ENCODE measurements at regions of chr1 and their contacts with region 1.

Region 1: GRCh38 chr1:205919026-205919746 is 24.1 kb downstream of the SLC26A9 start:
- DNase-seq: peak; percentile 61 to 77
- ATAC-seq: peak; percentile 65 to 76
- H3K4me3 ChIP-seq: no peak overlapping the region
- H3K27ac ChIP-seq: peak overlapping the region; percentile 73 to 77 (median 75)
- H3K4me1 ChIP-seq: peaks cover 29 to 46% of the 10 kb centered on the region in 2 donors
- H3K27me3 ChIP-seq: no peaks in the 10 kb centered on the region
- CTCF ChIP-seq: peak; percentile 88 to 93 (median 91)
- POLR2A ChIP-seq: no peak

Region 2: DNA sequence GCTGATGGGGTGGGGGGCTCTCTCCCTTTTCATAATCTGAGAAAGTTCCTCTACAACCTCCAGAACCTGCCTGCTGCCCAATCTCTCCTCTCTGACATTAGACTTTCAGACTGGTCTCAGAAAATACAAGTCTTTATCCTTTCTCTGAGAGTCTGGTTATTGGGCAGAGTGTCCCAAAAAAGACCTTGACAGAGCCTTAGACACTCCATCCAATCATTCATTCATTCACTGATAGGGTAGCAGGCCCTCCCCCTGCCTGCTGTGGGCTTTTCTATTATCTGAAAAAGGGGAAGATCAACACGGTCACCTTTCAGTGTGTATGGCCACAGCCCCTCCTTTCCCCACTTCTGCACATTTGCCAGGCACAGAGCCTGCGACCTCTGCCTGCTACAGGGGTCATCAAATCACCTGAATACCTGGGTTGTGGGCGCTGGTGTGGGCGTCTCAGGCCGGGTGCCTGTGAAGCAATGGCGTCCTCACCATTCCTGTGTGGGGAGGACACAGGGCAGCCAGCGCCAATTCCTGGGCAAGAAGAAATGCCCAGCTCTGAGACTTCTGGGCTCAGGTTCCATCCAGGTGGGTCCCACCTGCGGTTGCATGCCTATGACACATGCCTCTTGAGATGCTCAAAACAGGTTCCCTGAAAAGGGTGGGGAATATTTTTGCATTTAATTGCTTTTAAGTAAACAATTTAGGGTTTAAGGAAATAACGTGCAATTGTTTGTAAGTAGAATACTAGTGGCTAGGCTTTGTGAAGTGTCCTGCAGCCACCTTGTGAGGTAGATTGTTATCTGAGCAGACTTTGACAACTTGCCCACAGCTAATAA is 340.2 kb before region 1 on chr1:
- in situ Hi-C with region 1: no loop called
- intact Hi-C with region 1: no loop called
- DNase-seq: no peak
- ATAC-seq: no peak
- H3K4me3 ChIP-seq: no peak overlapping the region
- H3K27ac ChIP-seq: no peak overlapping the region
- H3K4me1 ChIP-seq: no peaks in the 10 kb centered on the region
- H3K27me3 ChIP-seq: peaks cover 0 to 9% (median 7%) of the 10 kb centered on the region in 3 donors
- CTCF ChIP-seq: no peak
- POLR2A ChIP-seq: no peak

Region 3: DNA sequence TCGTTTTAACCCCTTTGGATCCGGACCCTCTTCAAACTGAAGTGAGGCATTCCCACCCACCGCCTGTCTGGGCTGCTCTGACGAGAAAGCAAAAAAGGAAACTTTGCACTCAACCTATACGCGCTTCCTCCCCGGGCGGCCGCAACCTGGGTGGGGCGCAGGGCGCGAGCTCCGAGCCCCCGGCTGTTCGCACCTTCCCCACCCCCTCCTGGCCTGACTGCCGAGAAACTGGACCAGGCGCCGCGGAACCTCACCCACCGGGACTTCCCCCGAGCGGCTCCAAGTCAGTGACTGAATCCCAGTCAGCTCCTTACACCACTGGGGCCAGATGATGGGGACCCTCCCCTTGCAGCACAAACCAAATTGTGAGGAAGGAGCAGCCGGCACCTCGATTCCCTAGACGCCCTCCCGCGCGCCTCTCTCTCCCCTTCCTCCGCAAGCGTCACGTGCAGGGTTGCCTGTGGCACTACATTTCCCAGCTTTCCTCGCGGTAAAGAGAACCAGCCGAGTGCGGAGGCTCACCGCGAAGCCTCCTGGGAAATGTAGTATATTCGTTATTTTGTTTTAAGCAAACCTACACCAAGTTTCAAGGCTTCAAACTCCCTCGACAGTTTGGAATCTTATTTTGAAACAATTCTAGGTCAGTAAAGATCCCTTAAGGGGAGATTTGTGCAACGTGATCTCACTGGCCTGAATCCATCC is 144.0 kb before region 1 on chr1 and contains the start of gene RAB29:
- in situ Hi-C with region 1: loop called in 1 of 4 experiments (anchors 25 kb)
- intact Hi-C with region 1: no loop called
- DNase-seq: peak; percentile 80 to 84
- ATAC-seq: peak; percentile 98 to 100
- H3K4me3 ChIP-seq: peak within 1 kb of the TSS; percentile 81 to 90 (median 85)
- H3K27ac ChIP-seq: peak within 1 kb of the TSS; percentile 65 to 77 (median 73)
- H3K4me1 ChIP-seq: peaks cover 3 to 9% of the 10 kb centered on the region in 2 donors
- H3K27me3 ChIP-seq: no peaks in the 10 kb centered on the region
- CTCF ChIP-seq: no peak
- POLR2A ChIP-seq: peak; percentile 56 to 59
- total RNA-seq, gene RAB29: 8.4 to 13.8 (median 10.7) TPM

Region 4: DNA sequence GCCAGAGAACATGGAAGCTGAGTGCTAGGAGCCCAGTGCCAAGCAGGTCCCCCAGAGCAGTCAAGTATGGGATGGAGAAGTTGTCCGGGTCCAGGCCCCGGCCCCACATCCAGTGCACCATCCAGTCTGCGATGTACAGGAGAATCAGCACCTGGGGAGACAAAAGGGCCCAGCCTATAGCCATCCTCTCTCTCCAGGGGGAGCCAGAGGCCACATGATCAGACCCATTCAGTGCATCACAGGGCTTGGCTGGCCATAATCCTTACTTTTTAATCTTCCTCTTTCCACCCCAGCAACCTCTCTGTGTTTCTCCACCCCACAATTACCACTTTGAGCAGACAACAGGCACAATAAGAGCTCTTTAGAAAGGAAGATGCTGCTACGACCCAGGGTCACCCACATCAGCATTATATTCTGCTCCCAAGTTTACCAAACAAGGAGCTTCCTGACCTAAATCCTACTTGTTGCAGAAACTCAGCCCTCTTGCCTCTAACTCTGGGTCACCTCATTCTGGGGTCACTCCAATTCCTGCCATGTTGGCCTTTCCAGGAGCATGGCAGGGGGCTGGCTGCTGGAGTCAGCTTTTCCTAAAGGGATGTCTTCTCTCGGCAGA is 127.5 kb before region 1 on chr1:
- in situ Hi-C with region 1: loop called in 3 of 4 experiments (anchors 10 to 25 kb)
- intact Hi-C with region 1: loop called (anchors 2 kb)
- DNase-seq: peak; percentile 37 to 65
- ATAC-seq: peak; percentile 79 to 84
- H3K4me3 ChIP-seq: no peak overlapping the region
- H3K27ac ChIP-seq: peak overlapping the region in 3 of 4 donors; percentile 2 to 45 (median 37)
- H3K4me1 ChIP-seq: peaks cover 0 to 5% of the 10 kb centered on the region in 2 donors
- H3K27me3 ChIP-seq: no peaks in the 10 kb centered on the region
- CTCF ChIP-seq: peak; percentile 59 to 81 (median 67)
- POLR2A ChIP-seq: no peak

Region 5: DNA sequence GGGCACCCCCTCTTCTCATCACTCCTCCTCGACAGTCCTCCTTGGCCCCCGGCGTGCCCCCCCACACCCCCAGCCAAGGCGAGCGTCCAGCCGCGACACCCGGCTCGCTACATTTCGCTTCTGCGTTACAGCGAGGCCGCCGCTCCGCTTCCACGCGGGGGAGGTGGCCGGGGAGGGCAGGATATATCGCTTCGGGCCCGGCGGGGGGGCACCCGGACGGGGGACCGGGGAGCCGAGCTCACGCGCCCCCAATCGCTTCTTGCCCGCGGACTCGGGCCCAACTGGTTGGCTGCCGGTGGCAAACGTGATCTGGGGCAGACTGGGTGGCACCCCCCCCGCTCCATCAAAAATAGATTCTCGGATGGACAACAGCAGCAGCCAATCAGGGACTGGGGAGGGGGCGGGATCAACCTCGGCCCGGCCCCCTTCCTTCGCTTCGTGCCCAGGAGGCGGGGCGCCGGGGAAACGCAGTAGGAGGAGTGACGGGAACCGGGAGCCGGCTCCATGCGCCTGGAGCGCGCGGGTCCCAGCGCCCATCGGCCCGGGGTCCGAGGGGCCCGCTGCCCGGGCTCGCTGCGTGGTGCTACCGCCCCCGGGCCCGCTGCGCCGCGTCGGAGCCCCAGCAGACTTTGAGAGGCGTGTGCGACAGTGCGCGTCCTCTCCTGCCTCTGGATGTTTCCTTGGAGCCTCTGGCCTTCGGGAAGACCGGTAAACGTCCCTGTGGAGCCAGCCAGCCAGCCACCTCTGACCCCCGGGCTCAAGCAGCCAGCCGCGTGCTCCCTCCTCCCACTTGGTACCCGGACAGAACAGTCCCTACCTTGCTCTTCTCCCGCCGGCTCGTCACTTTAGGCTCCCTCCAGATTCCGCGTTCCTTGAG is 106.1 kb before region 1 on chr1 and contains the start of gene SLC41A1:
- in situ Hi-C with region 1: no loop called
- intact Hi-C with region 1: loop called (anchors 5 kb)
- DNase-seq: peak; percentile 96
- ATAC-seq: peak; percentile 83 to 92
- H3K4me3 ChIP-seq: peak within 1 kb of the TSS; percentile 80 to 92 (median 88)
- H3K27ac ChIP-seq: peak within 1 kb of the TSS; percentile 92 to 98 (median 97)
- H3K4me1 ChIP-seq: peaks cover 48 to 65% of the 10 kb centered on the region in 2 donors
- H3K27me3 ChIP-seq: no peaks in the 10 kb centered on the region
- CTCF ChIP-seq: no peak
- POLR2A ChIP-seq: peak; percentile 97
- total RNA-seq, gene SLC41A1: 21.5 to 39.8 (median 36.8) TPM

Region 6: GRCh38 chr1:205977402-205978014 is 58.3 kb after region 1 on chr1:
- in situ Hi-C with region 1: loop called in 3 of 4 experiments (anchors 5 to 10 kb)
- intact Hi-C with region 1: loop called (anchors 1 kb)
- DNase-seq: peak; percentile 45 to 50
- ATAC-seq: peak; percentile 83 to 88
- H3K4me3 ChIP-seq: no peak overlapping the region
- H3K27ac ChIP-seq: peak overlapping the region; percentile 66 to 85 (median 71)
- H3K4me1 ChIP-seq: peaks cover 14 to 20% of the 10 kb centered on the region in 2 donors
- H3K27me3 ChIP-seq: no peaks in the 10 kb centered on the region
- CTCF ChIP-seq: peak; percentile 91 to 97 (median 94)
- POLR2A ChIP-seq: no peak

Region 7: GRCh38 chr1:205983925-205984725 is 64.9 kb after region 1 on chr1:
- in situ Hi-C with region 1: loop called in 3 of 4 experiments (anchors 5 to 10 kb)
- intact Hi-C with region 1: no loop called
- DNase-seq: peak; percentile 38 to 50
- ATAC-seq: peak; percentile 71 to 82
- H3K4me3 ChIP-seq: no peak overlapping the region
- H3K27ac ChIP-seq: no peak overlapping the region
- H3K4me1 ChIP-seq: peaks cover 0 to 4% of the 10 kb centered on the region in 2 donors
- H3K27me3 ChIP-seq: no peaks in the 10 kb centered on the region
- CTCF ChIP-seq: peak; percentile 38 to 67 (median 58)
- POLR2A ChIP-seq: no peak

Region 8: GRCh38 chr1:206106328-206107167 is 187.4 kb after region 1 on chr1:
- in situ Hi-C with region 1: loop called in 3 of 4 experiments (anchors 10 to 25 kb)
- intact Hi-C with region 1: loop called (anchors 2 kb)
- DNase-seq: peak; percentile 48 to 69
- ATAC-seq: peak; percentile 83 to 84
- H3K4me3 ChIP-seq: no peak overlapping the region
- H3K27ac ChIP-seq: no peak overlapping the region
- H3K4me1 ChIP-seq: no peaks in the 10 kb centered on the region
- H3K27me3 ChIP-seq: no peaks in the 10 kb centered on the region
- CTCF ChIP-seq: peak; percentile 72 to 80 (median 76)
- POLR2A ChIP-seq: no peak

Region 9: GRCh38 chr1:206430031-206430983 is 511.1 kb after region 1 on chr1:
- in situ Hi-C with region 1: no loop called
- intact Hi-C with region 1: no loop called
- DNase-seq: no peak
- ATAC-seq: peak; percentile 39 to 72
- H3K4me3 ChIP-seq: no peak overlapping the region
- H3K27ac ChIP-seq: peak overlapping the region; percentile 21 to 64 (median 35)
- H3K4me1 ChIP-seq: peaks cover 0 to 6% of the 10 kb centered on the region in 2 donors
- H3K27me3 ChIP-seq: no peaks in the 10 kb centered on the region
- CTCF ChIP-seq: peak in 1 of 5 experiments; percentile 29
- POLR2A ChIP-seq: no peak

Measured in gastrocnemius medialis (tissue), 4 donors.